ENCODE measurements at regions of chr6 and their contacts with region 1.

Region 1: GRCh38 chr6:13303668-13304017 is 24.7 kb downstream of the TBC1D7 start:
- DNase-seq: peak; percentile 87
- ATAC-seq: peak; percentile 79

Region 2: DNA sequence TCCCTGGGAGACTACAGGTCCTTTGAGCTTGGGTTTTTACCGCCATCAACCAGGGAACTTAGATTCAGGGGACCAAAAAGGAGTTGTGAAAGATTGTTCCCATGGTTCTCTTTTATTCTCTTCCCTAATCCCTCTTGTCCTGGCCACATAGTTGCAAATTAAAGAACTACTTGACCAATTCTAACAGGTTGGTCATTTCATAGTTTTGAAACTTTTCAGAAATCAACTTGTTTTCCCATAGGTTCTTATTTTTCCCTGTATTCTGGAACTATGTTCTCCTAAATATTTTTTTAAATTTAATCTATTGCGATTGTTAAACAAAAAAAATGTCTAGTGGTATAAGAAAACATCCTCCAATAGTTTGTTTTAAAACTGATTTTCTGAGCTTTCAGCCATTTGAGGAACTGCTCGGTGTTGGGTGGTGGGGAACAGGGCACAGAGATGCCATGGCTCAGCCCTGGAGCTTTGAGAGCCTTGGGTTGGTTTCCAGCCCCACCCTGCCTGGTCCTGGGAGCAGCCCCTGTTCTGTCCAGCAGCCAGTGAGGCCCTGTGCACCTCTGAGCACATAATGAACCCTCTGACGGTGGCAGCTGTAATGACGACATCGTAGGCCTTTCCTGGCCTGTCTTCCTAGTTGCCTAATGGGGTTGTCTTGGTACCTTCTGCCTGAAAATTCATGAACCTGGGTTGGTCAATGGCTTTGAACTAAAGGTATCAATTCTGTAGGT is 28.8 kb before region 1 on chr6:
- intact Hi-C with region 1: loop called (anchors 1 kb)
- DNase-seq: no peak
- ATAC-seq: no peak

Region 3: GRCh38 chr6:13500264-13500663 is 196.6 kb after region 1 on chr6:
- intact Hi-C with region 1: no loop called
- DNase-seq: no peak
- ATAC-seq: no peak